Heart left ventricle (tissue), 16 donors: ENCODE measurements at regions of chr7 and their contacts with region 1.

Region 1: DNA sequence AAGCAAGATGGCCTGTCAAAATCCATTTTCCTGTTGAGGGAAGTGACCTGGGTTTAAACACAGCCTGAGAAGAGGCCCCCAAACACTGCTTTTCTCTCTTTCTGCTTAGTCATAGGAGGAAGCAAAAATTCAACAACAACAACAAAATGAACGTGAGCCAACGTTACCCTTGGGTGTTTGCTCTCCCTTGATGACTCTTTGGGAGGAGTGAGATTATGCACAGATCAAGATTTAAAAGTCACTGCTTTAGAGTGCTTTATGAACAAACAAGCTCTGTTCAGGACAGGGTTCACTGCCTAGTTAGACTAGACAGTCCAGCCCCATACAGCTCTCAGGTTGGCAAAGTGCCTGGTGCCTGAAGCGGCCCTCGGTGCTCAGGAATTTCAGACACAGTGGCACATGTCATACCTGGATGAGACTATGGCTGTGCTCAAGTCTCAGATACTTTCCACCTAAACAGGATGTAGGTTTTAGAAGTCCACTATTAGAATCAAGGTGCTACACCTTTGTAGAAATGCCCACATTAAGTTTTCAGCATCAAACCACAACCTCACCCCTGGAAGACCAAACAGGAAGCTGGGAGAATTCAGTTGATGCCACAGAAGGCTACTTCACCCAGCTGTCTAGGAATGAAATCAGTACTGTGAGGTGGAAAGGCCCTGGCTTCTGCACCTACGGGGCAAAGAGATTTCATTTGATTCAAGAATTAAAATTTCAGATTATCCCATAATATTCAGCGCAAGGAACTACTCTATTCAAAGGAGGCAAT is 38.7 kb downstream of the DENND11 start:
- DNase-seq: no peak
- ATAC-seq: peak in 2 of 4 donors; percentile 38 to 39
- H3K4me3 ChIP-seq: no peak overlapping the region
- H3K27ac ChIP-seq: peak overlapping the region in 2 of 12 donors; percentile 30 to 85
- H3K4me1 ChIP-seq: peaks cover 0 to 43% (median 0%) of the 10 kb centered on the region in 12 donors
- H3K27me3 ChIP-seq: no peaks in the 10 kb centered on the region
- CTCF ChIP-seq: no peak
- POLR2A ChIP-seq: no peak

Region 2: GRCh38 chr7:141701489-141702046 is 38.3 kb after region 1 on chr7:
- intact Hi-C with region 1: loop called in 2 of 10 experiments (anchors 5 kb)
- DNase-seq: peak; percentile 38 to 67 (median 50)
- ATAC-seq: peak; percentile 50 to 69 (median 66)
- H3K4me3 ChIP-seq: peak overlapping the region; percentile 65 to 98 (median 82)
- H3K27ac ChIP-seq: peak overlapping the region; percentile 47 to 90 (median 86)
- H3K4me1 ChIP-seq: peaks cover 0 to 50% (median 23%) of the 10 kb centered on the region in 12 donors
- H3K27me3 ChIP-seq: no peaks in the 10 kb centered on the region
- CTCF ChIP-seq: no peak
- POLR2A ChIP-seq: no peak

Region 3: DNA sequence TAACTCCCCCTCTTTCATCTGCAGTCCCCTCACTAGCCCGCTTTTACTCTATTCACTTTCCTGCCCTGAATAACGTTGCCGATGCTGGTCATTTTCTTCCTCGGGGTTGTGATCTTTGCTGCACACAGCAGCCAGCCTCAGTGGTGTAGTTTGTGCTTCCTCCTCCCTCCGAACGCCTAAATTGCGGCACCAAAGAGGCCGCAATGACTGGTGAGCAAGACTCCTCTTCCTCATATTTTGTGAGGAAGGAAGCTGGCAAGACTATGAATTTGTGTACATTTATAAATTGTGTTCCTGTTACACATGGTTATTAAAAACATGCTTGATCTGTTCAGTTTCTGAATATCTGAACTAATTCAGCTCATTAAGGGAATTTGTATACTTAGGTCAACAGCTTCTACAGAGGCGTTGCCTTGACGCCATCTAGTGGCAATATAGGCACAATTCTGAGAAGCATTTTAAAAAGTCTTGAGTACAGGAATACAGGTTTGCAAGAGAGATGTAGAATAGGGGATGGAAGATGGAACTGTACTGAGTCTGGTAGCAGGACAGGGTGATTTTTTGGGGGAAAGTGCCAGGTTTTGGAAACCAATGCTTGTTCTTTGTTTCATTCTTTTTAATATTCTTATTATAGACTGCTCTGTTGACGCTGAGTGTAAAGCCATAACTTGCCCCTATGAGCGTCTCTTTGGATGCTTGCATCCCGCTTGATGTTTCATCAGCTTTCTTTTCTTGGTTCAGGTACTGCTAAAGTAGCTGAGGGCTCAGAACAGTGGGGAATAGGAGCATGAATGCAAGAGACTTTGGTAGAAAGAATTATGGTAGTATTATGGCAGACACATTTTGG is 122.7 kb after region 1 on chr7:
- intact Hi-C with region 1: loop called in 1 of 10 experiments (anchors 5 kb)
- DNase-seq: no peak
- ATAC-seq: peak in 2 of 4 donors; percentile 10 to 39
- H3K4me3 ChIP-seq: no peak overlapping the region
- H3K27ac ChIP-seq: no peak overlapping the region
- H3K4me1 ChIP-seq: peaks cover 0 to 3% (median 0%) of the 10 kb centered on the region in 12 donors
- H3K27me3 ChIP-seq: no peaks in the 10 kb centered on the region
- CTCF ChIP-seq: peak; percentile 55 to 78 (median 70)
- POLR2A ChIP-seq: no peak